Activated CD4-positive, alpha-beta memory T cell treated with anti-CD3 and anti-CD28 coated beads, Interleukin-2, amount 10 ng/mL, durations not matched to agents 7 days and 5 days (primary cell): ENCODE measurements at regions of chr14 and their contacts with region 1.

Region 1: DNA sequence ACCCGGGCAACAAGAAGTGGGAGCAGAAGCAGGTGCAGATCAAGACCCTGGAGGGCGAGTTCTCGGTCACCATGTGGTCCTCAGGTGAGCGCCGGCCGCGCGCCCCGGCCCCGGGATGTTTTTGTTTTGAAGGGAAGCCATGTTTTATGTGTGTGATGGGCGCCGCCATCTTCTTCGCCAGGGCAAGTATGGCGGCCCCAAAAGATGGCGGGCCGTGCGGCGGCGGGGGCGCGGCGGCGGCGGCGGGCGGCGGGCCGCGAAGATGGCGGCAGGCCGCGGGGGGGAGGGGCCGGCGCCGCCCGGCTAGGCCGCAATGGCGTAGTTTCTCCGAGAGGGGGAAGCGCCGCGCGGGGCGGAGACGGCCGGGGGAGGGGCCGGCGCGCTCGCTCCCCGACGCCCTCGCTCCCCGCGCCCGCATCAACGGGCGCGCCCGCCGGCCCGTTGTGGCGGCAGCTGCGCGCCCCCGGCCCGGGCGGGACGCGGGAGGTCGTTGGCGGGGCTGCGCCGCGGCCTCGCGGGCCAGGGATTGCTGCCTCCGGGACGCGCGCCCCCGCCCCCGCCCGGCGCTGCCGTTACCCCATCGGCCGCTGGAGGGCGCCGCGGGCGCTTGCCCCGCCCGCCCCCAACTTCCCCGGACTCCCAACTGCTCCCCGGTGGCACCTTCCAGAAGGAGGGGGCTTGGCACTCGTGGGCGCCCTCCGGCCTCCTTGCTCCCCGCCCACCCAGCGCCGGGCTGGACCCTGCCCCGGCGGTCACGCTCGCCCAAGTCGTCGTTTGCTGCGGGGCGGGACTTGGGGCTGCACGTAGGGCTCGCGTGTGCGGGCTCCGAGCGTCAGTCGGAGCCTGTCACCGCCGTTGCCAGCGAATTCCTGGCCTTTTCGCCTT is 1.1 kb downstream of the YY1 start:
- DNase-seq: peak; percentile 89
- H3K4me3 Mint-ChIP-seq: peak overlapping the region; percentile 89
- H3K27ac Mint-ChIP-seq: peak overlapping the region; percentile 89
- H3K4me1 Mint-ChIP-seq: peaks cover 52% of the 10 kb centered on the region
- H3K27me3 Mint-ChIP-seq: no peaks in the 10 kb centered on the region

Region 2: GRCh38 chr14:100213956-100214774 is 25.9 kb before region 1 on chr14:
- CTCF ChIA-PET with region 1: interaction called, 7 read pairs
- POLR2A ChIA-PET with region 1: interaction called, 57 read pairs
- DNase-seq: peak; percentile 93
- H3K4me3 Mint-ChIP-seq: peak overlapping the region; percentile 65
- H3K27ac Mint-ChIP-seq: peak overlapping the region; percentile 78
- H3K4me1 Mint-ChIP-seq: peaks cover 23% of the 10 kb centered on the region
- H3K27me3 Mint-ChIP-seq: no peaks in the 10 kb centered on the region

Region 3: DNA sequence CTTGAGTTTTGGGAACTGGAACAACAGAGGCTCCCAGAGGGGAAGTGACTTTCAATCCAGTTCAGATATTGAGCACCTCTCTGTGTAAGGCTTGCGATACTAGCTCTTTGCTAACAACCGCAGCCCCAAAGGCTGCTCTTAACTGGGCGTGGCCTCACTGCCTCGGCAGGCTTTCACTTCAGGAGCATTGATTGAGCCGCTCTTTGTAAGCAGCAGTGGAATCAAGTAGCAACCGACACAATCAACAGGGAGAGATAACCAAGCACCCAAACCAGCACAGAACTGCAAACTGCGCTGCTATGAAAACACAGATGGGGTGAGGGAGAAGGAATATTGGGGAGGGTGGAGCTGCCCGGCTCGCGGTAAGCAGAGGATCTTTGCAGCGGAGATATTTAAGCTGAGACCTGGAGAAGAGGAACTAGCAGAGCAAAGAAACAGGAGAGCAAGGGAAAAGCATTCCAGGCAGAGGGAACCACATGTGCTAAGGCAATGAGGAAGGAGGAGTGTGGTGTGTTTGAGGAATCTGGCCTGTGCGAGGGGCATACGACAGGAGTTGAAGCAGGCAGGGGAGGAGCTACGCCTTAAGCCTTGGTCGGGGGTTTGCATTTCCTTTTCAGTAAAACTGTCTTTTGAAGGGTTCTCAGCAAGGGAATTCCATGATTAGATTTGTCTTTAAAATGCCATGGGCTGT is 18.4 kb before region 1 on chr14:
- CTCF ChIA-PET with region 1: interaction called, 73 read pairs
- POLR2A ChIA-PET with region 1: interaction called, 268 read pairs
- DNase-seq: peak; percentile 82
- H3K4me3 Mint-ChIP-seq: no peak overlapping the region
- H3K27ac Mint-ChIP-seq: no peak overlapping the region
- H3K4me1 Mint-ChIP-seq: peaks cover 8% of the 10 kb centered on the region
- H3K27me3 Mint-ChIP-seq: no peaks in the 10 kb centered on the region

Region 4: DNA sequence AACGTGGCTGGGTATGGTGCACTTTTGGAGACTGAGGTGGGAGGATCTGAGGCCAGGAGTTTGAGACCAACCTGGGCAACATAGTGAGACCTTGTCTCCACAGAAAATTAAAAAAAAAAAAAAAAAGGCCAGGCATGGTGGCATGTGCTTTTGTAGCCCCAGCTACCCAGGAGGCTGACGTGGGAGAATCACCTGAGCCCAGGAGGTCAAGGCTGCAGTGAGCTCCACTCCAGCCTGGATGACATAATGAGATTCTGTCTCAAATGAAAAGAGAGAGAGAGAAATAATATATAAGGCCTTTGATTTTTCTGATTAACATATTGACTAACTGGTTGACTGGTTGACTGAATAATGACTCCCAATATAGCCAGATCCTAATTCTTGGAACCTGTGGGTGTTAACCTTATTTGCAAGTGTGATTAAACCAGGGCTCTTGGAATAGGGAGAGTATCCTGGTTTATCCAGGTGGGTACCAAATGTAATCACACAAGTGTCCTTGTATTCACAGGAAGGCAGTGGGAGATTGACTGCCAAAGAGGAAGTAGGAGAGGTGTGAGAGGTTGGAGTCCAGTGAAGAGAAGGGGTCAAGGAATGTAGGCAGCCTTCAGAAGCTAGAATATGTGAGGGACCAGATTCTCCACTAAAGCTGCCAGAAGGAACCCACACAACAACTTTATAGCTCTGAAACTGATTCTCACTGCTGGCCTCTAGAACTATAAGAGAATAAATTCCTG is 10.8 kb after region 1 on chr14:
- CTCF ChIA-PET with region 1: interaction called, 16 read pairs
- POLR2A ChIA-PET with region 1: interaction called, 6 read pairs
- DNase-seq: no peak
- H3K4me3 Mint-ChIP-seq: no peak overlapping the region
- H3K27ac Mint-ChIP-seq: no peak overlapping the region
- H3K4me1 Mint-ChIP-seq: peaks cover 62% of the 10 kb centered on the region
- H3K27me3 Mint-ChIP-seq: no peaks in the 10 kb centered on the region

Region 5: DNA sequence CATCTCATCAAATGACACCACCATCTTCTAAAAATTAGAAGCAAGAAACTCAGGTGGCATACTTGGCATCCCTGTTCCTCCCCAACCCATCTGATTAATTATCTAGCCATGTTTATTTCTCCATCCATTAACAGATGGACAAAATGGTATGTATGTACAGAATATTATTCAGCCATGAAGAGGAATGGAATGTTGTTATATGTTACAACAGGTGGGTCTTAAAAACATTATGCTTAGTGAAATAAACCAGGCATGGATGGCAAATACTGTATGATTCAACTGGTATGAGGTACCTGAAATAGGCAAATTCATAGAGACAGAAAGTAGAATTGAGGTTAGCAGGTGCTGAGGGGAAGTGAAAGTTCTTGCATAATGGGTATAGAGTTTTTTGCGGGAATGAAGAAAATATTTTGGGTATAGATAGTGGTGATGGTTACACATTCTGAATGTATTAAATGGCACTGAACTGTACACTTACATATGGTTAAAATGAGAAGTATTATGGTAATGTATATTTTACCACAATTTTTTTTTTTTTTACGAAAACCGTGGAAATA is 16.3 kb after region 1 on chr14:
- CTCF ChIA-PET with region 1: interaction called, 24 read pairs
- POLR2A ChIA-PET with region 1: interaction called, 8 read pairs
- DNase-seq: no peak
- H3K4me3 Mint-ChIP-seq: no peak overlapping the region
- H3K27ac Mint-ChIP-seq: no peak overlapping the region
- H3K4me1 Mint-ChIP-seq: peaks cover 73% of the 10 kb centered on the region
- H3K27me3 Mint-ChIP-seq: no peaks in the 10 kb centered on the region

Region 6: GRCh38 chr14:100263144-100263543 is 23.1 kb after region 1 on chr14:
- CTCF ChIA-PET with region 1: interaction called, 24 read pairs
- POLR2A ChIA-PET with region 1: interaction called, 8 read pairs
- DNase-seq: no peak
- H3K4me3 Mint-ChIP-seq: no peak overlapping the region
- H3K27ac Mint-ChIP-seq: peak overlapping the region; percentile 16
- H3K4me1 Mint-ChIP-seq: peaks cover 59% of the 10 kb centered on the region
- H3K27me3 Mint-ChIP-seq: no peaks in the 10 kb centered on the region

Region 7: GRCh38 chr14:100285021-100285912 is 45.2 kb after region 1 on chr14:
- CTCF ChIA-PET with region 1: interaction called, 31 read pairs
- POLR2A ChIA-PET with region 1: no interaction called
- DNase-seq: peak; percentile 81
- H3K4me3 Mint-ChIP-seq: peak overlapping the region; percentile 78
- H3K27ac Mint-ChIP-seq: no peak overlapping the region
- H3K4me1 Mint-ChIP-seq: peaks cover 11% of the 10 kb centered on the region
- H3K27me3 Mint-ChIP-seq: no peaks in the 10 kb centered on the region